Mucosa of descending colon (tissue), 3 donors: ENCODE measurements at regions of chr1 and their contacts with region 1.

Region 1: GRCh38 chr1:112955781-112956543 is at the start of gene SLC16A1:
- DNase-seq: peak; percentile 92
- ATAC-seq: peak; percentile 93
- H3K4me3 ChIP-seq: peak within 1 kb of the TSS; percentile 44
- H3K4me1 ChIP-seq: peaks cover 13% of the 10 kb centered on the region
- CTCF ChIP-seq: no peak
- total RNA-seq, gene SLC16A1: 71.2 to 172 (median 88.0) TPM

Region 2: GRCh38 chr1:112666946-112667345 is 289.0 kb before region 1 on chr1:
- intact Hi-C with region 1: no loop called
- DNase-seq: no peak
- ATAC-seq: no peak
- H3K4me3 ChIP-seq: no peak overlapping the region
- H3K4me1 ChIP-seq: no peaks in the 10 kb centered on the region
- CTCF ChIP-seq: no peak

Region 3: GRCh38 chr1:112809253-112809684 is 146.7 kb before region 1 on chr1:
- intact Hi-C with region 1: no loop called
- DNase-seq: peak; percentile 67 to 92 (median 89)
- ATAC-seq: peak; percentile 96
- H3K4me3 ChIP-seq: no peak overlapping the region
- H3K4me1 ChIP-seq: peaks cover 6% of the 10 kb centered on the region
- CTCF ChIP-seq: peak; percentile 83

Region 4: DNA sequence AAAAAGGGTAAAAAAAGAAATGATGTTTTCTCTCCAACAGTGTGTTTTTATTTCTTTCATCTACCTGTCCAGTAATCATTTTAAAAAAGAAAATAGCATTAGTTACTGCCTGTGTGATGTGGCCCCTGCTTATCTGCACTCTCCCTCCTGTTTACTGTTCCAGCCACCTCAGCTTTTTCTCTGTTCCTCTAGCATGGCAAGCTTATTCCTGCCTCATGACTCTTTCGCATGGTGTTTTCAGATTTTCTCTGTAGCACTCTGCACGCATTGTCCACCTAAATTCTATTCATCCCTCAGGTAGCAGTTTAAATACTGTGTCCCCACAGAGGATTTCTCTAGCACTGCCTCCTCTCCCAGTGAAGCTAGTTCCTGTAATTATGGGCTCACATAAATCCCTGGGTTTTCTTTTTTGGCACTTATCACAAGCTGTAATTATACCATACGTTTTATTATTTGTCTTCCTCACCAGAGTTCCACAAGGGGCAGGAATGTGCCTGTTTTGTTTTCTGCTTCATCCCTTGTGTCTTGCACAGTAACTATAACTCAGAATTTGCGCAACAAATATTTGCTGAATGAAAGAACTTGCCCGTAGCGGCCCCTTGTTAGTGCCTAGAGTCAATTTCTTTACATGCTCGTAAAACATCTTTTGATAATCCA is 65.6 kb after region 1 on chr1:
- intact Hi-C with region 1: loop called in 1 of 2 experiments (anchors 10 kb)
- DNase-seq: no peak
- ATAC-seq: peak; percentile 69
- H3K4me3 ChIP-seq: no peak overlapping the region
- H3K4me1 ChIP-seq: peaks cover 11% of the 10 kb centered on the region
- CTCF ChIP-seq: no peak